Natural killer cell (primary cell): ENCODE measurements at regions of chr2 and their contacts with region 1.

Region 1: GRCh38 chr2:224038049-224038829 is 847 bp downstream of the SERPINE2 start:
- DNase-seq: peak; percentile 40 to 56
- ATAC-seq: peak; percentile 62 to 67 (median 65)
- H3K4me3 ChIP-seq: peak overlapping the region; percentile 46
- H3K4me3 Mint-ChIP-seq: peak overlapping the region; percentile 95
- H3K27ac ChIP-seq: no peak overlapping the region
- H3K27ac Mint-ChIP-seq: peak overlapping the region; percentile 22 to 71
- H3K4me1 ChIP-seq: peaks cover 15% of the 10 kb centered on the region
- H3K4me1 Mint-ChIP-seq: peaks cover 21 to 33% of the 10 kb centered on the region in 2 donors
- H3K27me3 ChIP-seq: peaks cover 6% of the 10 kb centered on the region
- H3K27me3 Mint-ChIP-seq: peaks cover 28 to 41% of the 10 kb centered on the region in 2 donors
- CTCF ChIP-seq: no peak

Region 2: GRCh38 chr2:224025874-224026273 is 12.4 kb before region 1 on chr2:
- intact Hi-C with region 1: loop called (anchors 1 kb)
- DNase-seq: peak; percentile 49 to 75
- ATAC-seq: peak; percentile 85 to 94 (median 92)
- H3K4me3 ChIP-seq: no peak overlapping the region
- H3K4me3 Mint-ChIP-seq: peak overlapping the region; percentile 80
- H3K27ac ChIP-seq: peak overlapping the region; percentile 82
- H3K27ac Mint-ChIP-seq: peak overlapping the region; percentile 91 to 97
- H3K4me1 ChIP-seq: peaks cover 26% of the 10 kb centered on the region
- H3K4me1 Mint-ChIP-seq: peaks cover 47 to 62% of the 10 kb centered on the region in 2 donors
- H3K27me3 ChIP-seq: no peaks in the 10 kb centered on the region
- H3K27me3 Mint-ChIP-seq: no peaks in the 10 kb centered on the region
- CTCF ChIP-seq: no peak